Breast epithelium (tissue), 4 donors: ENCODE measurements at regions of chr14 and their contacts with region 1.

Region 1: DNA sequence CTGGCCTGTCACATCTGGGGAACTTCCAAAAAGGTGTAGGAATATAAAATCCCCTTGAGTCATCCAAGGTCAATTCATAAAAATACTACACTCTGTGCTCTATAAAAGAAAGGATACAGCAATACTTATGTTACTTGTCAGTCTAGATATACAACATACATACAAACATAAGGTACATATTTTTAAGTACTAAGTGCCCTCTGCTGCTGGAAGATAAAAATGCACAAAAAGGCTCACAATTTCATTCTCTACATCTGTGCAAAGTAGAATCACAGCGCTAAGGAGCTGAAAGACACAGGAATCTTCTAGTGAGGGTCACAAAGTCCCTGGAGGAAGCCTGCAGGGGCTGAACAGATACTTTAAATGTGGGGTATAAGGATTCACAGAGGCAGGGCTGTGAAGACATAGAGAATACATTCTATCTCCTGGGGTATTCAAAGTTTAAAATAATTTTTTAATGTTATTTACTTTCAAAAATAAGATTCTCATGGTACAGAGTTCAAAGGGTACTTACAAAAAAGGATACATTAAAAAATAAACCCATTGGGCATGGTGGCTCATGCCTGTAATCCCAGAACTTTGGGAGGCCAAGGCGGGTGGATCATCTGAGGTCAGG is 10.2 kb upstream of the GOLGA5 start:
- DNase-seq: no peak
- H3K4me3 ChIP-seq: no peak overlapping the region
- H3K27ac ChIP-seq: no peak overlapping the region
- H3K4me1 ChIP-seq: no peaks in the 10 kb centered on the region
- H3K27me3 ChIP-seq: no peaks in the 10 kb centered on the region
- CTCF ChIP-seq: peak; percentile 31 to 67 (median 50)
- POLR2A ChIP-seq: no peak

Region 2: GRCh38 chr14:91836119-91836881 is 947.6 kb before region 1 on chr14:
- intact Hi-C with region 1: loop called (anchors 10 kb)
- DNase-seq: peak; percentile 85 to 96
- H3K4me3 ChIP-seq: peak overlapping the region; percentile 55 to 94 (median 90)
- H3K27ac ChIP-seq: peak overlapping the region; percentile 97 to 98
- H3K4me1 ChIP-seq: no peaks in the 10 kb centered on the region
- H3K27me3 ChIP-seq: no peaks in the 10 kb centered on the region
- CTCF ChIP-seq: no peak
- POLR2A ChIP-seq: no peak

Region 3: DNA sequence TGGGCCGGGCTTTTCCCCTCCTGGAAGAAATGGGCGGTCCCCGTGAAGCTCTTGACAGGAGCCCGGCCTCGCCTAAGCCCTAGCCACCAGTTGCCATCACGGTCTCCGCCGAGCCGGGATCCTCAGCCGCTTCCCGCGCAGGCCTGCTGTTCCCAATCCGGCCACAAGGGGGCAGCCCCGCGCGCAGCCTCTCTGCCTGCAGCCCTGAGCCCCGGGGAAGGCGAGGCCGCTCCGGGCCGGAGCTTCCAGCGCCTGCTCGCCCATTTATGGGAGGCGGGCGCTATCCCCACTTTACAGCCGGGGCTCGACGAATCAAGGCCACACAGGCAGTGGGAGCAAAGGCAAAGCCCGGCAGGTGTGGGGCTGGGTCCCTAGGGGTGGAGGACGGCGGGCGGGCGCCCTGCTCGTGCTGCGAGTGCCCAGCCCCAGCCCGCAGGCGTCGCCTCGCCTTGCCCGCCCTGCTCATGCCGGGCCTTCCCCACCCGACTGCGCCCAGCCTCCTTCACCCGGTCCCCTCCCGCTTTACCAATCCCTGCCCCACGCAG is 97.0 kb before region 1 on chr14:
- intact Hi-C with region 1: loop called (anchors 10 kb)
- DNase-seq: peak; percentile 51 to 67
- H3K4me3 ChIP-seq: peak overlapping the region; percentile 19 to 57 (median 37)
- H3K27ac ChIP-seq: no peak overlapping the region
- H3K4me1 ChIP-seq: no peaks in the 10 kb centered on the region
- H3K27me3 ChIP-seq: no peaks in the 10 kb centered on the region
- CTCF ChIP-seq: peak; percentile 80 to 93 (median 93)
- POLR2A ChIP-seq: no peak

Region 4: DNA sequence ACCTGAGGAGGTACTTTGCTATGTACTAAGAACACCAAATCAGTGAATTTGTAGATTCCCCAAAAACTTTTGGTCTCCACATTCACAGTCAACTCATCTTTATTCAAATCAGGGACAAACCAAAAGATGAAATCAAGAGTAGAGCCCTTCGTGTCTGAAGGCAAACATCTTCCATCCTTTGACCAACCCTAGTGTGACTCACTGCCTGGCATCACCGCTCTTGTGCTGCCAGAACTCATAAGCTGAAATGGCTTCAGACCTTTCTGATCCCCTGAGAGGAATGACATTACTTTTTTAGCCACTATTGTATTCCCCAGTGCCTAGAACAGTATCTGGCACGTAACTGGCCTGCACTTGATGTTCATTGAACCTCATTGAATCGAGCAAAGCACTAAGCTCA is 60.3 kb after region 1 on chr14:
- intact Hi-C with region 1: no loop called
- DNase-seq: no peak
- H3K4me3 ChIP-seq: no peak overlapping the region
- H3K27ac ChIP-seq: no peak overlapping the region
- H3K4me1 ChIP-seq: no peaks in the 10 kb centered on the region
- H3K27me3 ChIP-seq: no peaks in the 10 kb centered on the region
- CTCF ChIP-seq: no peak
- POLR2A ChIP-seq: no peak